PC-9 (cell line): ENCODE measurements at regions of chr1 and their contacts with region 1.

Region 1: GRCh38 chr1:235791532-235792060 is 75.1 kb downstream of the LYST start:
- DNase-seq: no peak
- H3K4me3 ChIP-seq: no peak overlapping the region
- H3K27ac ChIP-seq: peak overlapping the region; percentile 44
- H3K4me1 ChIP-seq: peaks cover 15% of the 10 kb centered on the region
- H3K27me3 ChIP-seq: no peaks in the 10 kb centered on the region
- CTCF ChIP-seq: no peak

Region 2: DNA sequence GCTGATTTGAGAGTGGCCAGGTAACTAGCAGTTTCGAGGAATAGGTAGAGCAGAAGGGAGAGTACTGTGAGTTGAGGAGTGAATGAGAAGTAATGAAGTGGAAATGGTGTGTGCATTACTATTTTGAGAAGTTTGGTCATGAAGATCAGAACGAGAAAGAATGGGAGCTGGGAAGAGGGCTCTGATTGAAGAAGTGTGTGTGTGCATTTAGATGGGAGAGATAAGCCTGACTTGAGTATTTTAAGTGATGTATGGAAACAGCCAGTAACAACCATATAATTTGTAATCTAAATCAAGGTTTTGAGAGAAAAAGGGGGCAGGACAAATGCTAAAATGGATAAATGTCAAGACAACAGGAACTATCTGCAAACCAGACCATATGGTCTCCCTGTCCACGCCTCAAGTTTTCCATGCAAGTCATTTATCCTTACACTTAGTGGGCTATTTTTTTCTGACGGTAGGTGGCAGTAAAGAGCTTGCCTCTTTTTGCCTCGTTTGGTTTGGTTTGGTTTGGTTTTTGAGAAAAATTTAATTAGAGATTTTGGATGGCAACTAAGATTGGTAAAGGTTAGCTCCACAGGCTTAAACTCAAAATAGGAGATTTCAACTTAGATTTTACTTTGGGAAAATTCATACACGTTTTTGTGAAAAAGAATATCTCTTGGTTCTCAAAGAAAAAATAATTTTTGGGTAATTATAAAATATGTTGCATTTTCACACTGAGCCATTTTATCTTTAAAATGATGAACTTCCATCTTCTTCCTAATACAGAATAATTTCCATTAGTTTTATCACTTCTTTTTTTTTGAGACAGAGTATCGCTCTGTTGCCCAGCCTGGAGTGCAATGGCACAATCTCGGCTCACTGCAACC is 277.9 kb before region 1 on chr1:
- CTCF ChIA-PET with region 1: no interaction called
- POLR2A ChIA-PET with region 1: no interaction called
- intact Hi-C with region 1: no loop called
- DNase-seq: peak; percentile 34 to 57
- H3K4me3 ChIP-seq: no peak overlapping the region
- H3K27ac ChIP-seq: no peak overlapping the region
- H3K4me1 ChIP-seq: no peaks in the 10 kb centered on the region
- H3K27me3 ChIP-seq: no peaks in the 10 kb centered on the region
- CTCF ChIP-seq: peak; percentile 93

Region 3: GRCh38 chr1:235843461-235843961 is 51.9 kb after region 1 on chr1:
- CTCF ChIA-PET with region 1: interaction called, 7 read pairs
- POLR2A ChIA-PET with region 1: no interaction called
- intact Hi-C with region 1: loop called (anchors 1 kb)
- DNase-seq: peak in 1 of 2 experiments; percentile 46
- H3K4me3 ChIP-seq: no peak overlapping the region
- H3K27ac ChIP-seq: no peak overlapping the region
- H3K4me1 ChIP-seq: no peaks in the 10 kb centered on the region
- H3K27me3 ChIP-seq: no peaks in the 10 kb centered on the region
- CTCF ChIP-seq: peak; percentile 59; the same call in 1 of the 2 replicates